IMR-90 (cell line): ENCODE measurements at regions of chr7 and their contacts with region 1.

Region 1: GRCh38 chr7:148299350-148300276 is 291.0 kb upstream of the C7orf33 start:
- DNase-seq: no peak
- ATAC-seq: no peak
- H3K4me3 ChIP-seq: no peak overlapping the region
- H3K27ac ChIP-seq: no peak overlapping the region
- H3K4me1 ChIP-seq: no peaks in the 10 kb centered on the region
- H3K27me3 ChIP-seq: no peaks in the 10 kb centered on the region
- CTCF ChIP-seq: no peak
- POLR2A ChIP-seq: no peak
- RAD21 ChIP-seq: no peak

Region 2: DNA sequence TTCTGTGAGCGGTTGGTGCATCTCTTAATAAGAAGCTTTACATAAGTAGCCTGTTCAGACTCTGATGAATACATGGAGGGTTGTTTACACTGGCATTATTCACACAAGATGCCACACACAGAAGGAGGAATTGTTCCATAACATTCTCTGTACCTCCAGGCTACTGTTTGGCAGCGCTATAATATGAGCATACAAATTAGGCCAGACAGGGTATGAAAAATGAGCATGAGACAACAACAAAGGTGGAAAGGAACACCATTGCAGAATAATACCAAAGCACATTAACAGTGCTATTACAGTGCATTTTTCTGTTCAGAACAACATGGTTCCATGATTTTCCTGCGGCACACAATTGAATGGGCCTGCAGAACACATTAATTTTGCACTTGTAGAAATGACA is 126.2 kb before region 1 on chr7:
- CTCF ChIA-PET with region 1: no interaction called
- POLR2A ChIA-PET with region 1: no interaction called
- dilution Hi-C with region 1: no loop called
- in situ Hi-C with region 1: no loop called
- intact Hi-C with region 1: no loop called
- DNase-seq: no peak
- ATAC-seq: no peak
- H3K4me3 ChIP-seq: no peak overlapping the region
- H3K27ac ChIP-seq: no peak overlapping the region
- H3K4me1 ChIP-seq: no peaks in the 10 kb centered on the region
- H3K27me3 ChIP-seq: no peaks in the 10 kb centered on the region
- CTCF ChIP-seq: no peak
- POLR2A ChIP-seq: no peak
- RAD21 ChIP-seq: no peak

Region 3: DNA sequence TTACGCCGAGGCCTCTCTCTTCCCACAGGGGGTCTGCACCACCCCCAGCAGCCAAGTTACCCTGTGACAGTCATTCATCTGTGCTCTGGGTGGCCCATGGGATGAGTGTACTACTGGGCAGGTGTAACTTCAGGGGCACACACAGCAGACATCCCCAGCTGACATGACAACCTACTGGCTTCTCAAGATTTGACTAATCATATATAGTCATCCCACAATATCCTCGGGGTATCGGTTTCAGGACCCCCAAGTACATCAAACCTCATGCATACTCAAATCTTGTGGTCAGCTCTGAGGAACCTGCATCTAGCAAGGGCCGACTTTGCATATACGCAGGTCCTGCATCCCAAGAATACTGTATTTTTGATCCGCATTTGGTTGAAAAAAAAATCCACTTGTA is 46.0 kb before region 1 on chr7:
- CTCF ChIA-PET with region 1: no interaction called
- POLR2A ChIA-PET with region 1: no interaction called
- dilution Hi-C with region 1: no loop called
- in situ Hi-C with region 1: no loop called
- intact Hi-C with region 1: loop called (anchors 2 kb)
- DNase-seq: no peak
- ATAC-seq: no peak
- H3K4me3 ChIP-seq: no peak overlapping the region
- H3K27ac ChIP-seq: no peak overlapping the region
- H3K4me1 ChIP-seq: no peaks in the 10 kb centered on the region
- H3K27me3 ChIP-seq: no peaks in the 10 kb centered on the region
- CTCF ChIP-seq: no peak
- POLR2A ChIP-seq: no peak
- RAD21 ChIP-seq: no peak

Region 4: GRCh38 chr7:148327383-148327782 is 27.8 kb after region 1 on chr7:
- CTCF ChIA-PET with region 1: no interaction called
- POLR2A ChIA-PET with region 1: no interaction called
- dilution Hi-C with region 1: no loop called
- in situ Hi-C with region 1: no loop called
- intact Hi-C with region 1: no loop called
- DNase-seq: no peak
- ATAC-seq: no peak
- H3K4me3 ChIP-seq: no peak overlapping the region
- H3K27ac ChIP-seq: no peak overlapping the region
- H3K4me1 ChIP-seq: no peaks in the 10 kb centered on the region
- H3K27me3 ChIP-seq: no peaks in the 10 kb centered on the region
- CTCF ChIP-seq: no peak
- POLR2A ChIP-seq: no peak
- RAD21 ChIP-seq: no peak